Posterior vena cava (tissue), 2 donors: ENCODE measurements at regions of chr12 and their contacts with region 1.

Region 1: DNA sequence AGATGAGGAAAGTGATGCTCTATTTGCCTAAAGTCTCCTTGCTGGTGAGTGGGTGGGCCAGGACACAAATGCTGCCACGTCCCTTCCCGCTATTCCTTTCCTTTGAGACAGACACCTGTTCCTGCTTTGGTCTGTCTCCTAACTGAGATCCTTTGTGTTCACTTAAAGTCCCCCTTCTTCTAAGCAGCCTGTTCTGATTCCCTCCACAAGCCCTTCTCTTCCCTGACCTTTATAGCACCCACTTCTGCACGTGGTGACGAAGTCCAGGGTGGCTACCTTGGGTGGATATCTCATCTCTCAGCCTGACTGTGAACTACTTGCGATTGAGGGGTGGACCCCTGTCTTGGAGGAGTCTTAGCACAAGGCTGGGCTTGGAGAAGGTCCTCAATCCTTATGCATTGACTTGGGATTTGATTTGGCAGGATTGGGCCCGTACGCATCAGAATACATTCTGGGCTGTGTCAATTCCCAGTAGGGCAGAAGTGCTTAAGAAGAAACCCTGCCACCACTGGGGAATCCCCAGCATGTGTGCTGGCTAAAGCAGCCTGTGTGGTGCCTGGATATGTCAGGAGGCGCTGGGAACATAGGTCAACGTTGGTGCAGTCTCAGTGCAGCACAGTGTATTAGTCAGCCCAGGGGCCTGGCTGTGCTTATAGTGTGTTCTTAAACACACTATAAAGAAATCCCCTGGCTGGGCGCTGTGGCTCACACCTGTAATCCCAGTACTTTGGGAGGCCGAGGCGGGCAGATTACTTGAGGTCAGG is 23.7 kb downstream of the KRT80 start:
- DNase-seq: no peak

Region 2: DNA sequence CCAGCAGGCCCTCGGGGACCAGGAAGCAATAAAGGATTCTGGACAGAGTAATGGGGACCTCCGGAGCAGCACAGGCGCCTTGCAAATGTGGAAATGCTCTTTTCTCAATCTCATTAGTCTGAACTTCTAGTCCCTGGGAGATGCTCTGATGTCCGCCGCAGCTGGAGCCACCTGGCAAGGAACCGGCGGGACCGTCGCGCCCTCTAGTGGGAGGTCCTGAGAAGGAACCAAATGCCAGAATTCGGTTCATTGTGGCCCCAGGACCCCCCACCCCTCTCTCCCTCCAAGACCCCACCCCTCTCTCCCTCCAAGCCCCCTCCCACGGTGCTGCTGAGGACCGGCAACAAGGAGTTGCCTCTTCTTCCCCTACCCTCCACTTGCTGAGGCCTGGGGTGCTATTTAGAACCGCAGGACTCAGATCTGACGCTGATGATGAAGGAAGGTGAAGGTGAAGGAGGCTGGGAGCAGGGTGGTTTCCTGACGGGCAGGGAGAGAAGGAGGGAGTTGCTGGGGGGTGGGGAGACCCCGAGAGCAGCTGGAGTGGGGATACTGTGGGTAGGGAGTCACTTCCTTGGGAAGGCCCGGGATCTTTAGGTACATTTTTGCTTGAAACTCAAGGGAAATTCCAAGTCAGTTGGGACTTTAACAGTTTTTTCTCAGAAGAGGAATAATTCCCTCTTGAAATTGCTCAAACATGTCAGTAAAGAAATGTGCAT is 46.2 kb before region 1 on chr12:
- intact Hi-C with region 1: no loop called
- DNase-seq: no peak

Region 3: GRCh38 chr12:52213512-52214420 is 45.6 kb after region 1 on chr12:
- intact Hi-C with region 1: loop called in 1 of 2 experiments (anchors 2 kb)
- DNase-seq: peak; percentile 87

Region 4: GRCh38 chr12:52416383-52416750 is 248.2 kb after region 1 on chr12:
- intact Hi-C with region 1: no loop called
- DNase-seq: no peak